BJ (cell line): ENCODE measurements at regions of chr1 and their contacts with region 1.

Region 1: DNA sequence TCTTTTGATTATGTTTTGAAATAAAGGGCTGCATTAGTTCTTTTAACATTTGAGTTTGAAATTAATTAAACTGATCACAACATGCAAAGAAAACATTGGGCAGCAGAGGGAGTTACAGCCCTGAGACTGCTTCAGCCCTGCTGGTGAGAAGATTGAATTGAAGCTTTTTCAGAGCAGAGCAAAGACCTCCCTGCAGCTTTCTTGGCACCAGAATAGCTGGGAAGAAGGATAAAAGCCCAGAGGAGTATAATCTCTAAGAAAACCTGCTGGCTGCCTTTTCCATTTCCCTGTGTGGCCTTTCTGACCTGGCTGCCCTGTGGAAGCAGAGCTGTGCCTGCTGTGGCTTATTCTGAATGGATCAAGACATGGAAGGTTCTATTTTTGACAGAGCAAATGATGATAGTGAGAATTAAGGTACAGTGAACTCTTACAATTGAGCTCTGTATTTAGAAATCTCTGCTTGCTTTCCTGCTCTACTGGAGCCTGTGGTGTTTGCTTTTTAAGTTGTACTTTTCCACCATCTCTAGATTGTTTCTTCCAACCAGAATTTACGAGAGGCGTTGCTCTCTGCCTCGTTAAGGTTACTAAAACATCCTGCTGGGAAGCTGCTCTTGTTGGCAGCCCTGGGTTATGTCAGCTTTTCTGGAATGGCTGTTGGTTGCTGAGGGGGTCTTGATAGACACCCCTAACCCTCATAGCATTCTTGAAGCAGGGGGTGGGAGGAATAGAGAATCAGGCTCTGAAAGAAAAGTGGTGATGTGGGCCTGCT is 9.9 kb downstream of the SNRPE start:
- DNase-seq: no peak
- H3K4me3 ChIP-seq: no peak overlapping the region
- H3K27me3 ChIP-seq: no peaks in the 10 kb centered on the region
- CTCF ChIP-seq: peak; percentile 91

Region 2: DNA sequence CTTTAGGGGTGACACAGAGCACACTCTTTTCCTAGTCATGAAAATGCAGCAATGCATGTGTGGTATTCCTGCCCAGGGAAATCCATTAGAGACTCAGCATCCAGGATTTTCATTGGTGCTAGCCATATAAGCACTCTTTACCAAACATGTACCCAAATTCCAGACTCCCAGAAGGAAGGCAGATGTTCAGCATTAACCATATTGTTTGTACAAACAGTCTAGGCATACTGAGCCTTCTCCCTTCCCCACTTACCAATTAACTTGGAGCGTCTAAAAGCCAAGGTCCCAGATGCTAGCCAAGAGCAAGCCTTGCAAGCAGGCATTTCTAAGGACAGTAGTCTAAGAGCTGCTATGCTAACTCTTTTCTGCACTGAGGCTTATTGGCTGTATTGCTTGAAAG is 48.0 kb before region 1 on chr1:
- CTCF ChIA-PET with region 1: no interaction called
- POLR2A ChIA-PET with region 1: no interaction called
- DNase-seq: peak; percentile 32
- H3K4me3 ChIP-seq: no peak overlapping the region
- H3K27me3 ChIP-seq: no peaks in the 10 kb centered on the region
- CTCF ChIP-seq: no peak

Region 3: GRCh38 chr1:203888807-203889251 is 17.5 kb after region 1 on chr1:
- CTCF ChIA-PET with region 1: interaction called, 10 read pairs
- POLR2A ChIA-PET with region 1: no interaction called
- DNase-seq: no peak
- H3K4me3 ChIP-seq: no peak overlapping the region
- H3K27me3 ChIP-seq: no peaks in the 10 kb centered on the region
- CTCF ChIP-seq: no peak

Region 4: GRCh38 chr1:204072931-204073836 is 201.9 kb after region 1 on chr1 and contains the start of gene SOX13:
- CTCF ChIA-PET with region 1: interaction called, 24 read pairs
- POLR2A ChIA-PET with region 1: no interaction called
- DNase-seq: no peak
- H3K4me3 ChIP-seq: peak within 1 kb of the TSS; percentile 84
- H3K27me3 ChIP-seq: no peaks in the 10 kb centered on the region
- CTCF ChIP-seq: peak; percentile 43
- polyA plus RNA-seq, gene SOX13: 6.2 and 9.5 TPM in 2 replicates

Region 5: DNA sequence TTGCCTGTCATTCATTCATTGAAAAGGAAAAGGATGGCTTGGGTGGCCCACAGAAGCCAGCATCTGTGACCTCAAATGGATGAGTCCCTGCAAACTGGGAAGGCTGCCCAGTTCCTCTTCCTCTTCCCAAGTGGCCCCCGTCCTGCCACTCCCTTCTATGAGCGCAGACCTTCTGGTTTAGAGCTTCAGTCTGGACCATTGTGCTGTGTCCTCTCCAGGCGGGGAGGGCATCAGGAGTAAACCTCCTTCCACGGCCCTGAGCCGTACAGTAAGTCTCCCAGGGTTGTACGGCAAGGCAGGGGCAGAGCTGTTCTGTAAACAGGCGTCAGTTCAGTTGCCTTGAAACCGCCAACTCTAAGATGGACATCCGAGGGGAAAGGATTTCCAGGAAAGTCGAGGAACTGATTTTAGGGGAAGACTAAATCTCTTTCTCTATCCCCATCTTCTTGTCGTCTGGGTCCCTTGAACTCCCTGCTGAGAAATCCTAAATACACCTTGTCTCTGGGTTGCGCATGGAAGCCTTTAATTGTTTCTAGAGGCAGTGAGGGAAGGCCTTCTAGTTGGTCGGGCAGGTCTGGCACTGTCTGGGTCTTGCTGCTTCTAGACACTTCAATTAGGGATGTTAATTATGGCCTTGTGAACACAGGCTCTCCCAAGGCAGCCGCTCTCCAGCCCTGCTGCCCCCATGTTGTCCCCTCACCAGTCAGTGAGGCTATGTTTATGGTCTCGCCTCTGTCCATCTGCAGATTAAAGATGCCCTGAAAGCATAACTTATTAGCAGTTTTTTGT is 223.8 kb after region 1 on chr1:
- CTCF ChIA-PET with region 1: interaction called, 15 read pairs
- POLR2A ChIA-PET with region 1: no interaction called
- DNase-seq: no peak
- H3K4me3 ChIP-seq: no peak overlapping the region
- H3K27me3 ChIP-seq: no peaks in the 10 kb centered on the region
- CTCF ChIP-seq: no peak

Region 6: GRCh38 chr1:204151552-204152309 is 280.4 kb after region 1 on chr1 and contains the start of gene ETNK2:
- CTCF ChIA-PET with region 1: interaction called, 11 read pairs
- POLR2A ChIA-PET with region 1: interaction called, 11 read pairs
- DNase-seq: no peak
- H3K4me3 ChIP-seq: peak within 1 kb of the TSS; percentile 73
- H3K27me3 ChIP-seq: no peaks in the 10 kb centered on the region; the same call in 1 of the 2 replicates
- CTCF ChIP-seq: no peak
- polyA plus RNA-seq, gene ETNK2: 27.2 and 30.7 TPM in 2 replicates